ENCODE measurements at regions of chr2 and their contacts with region 1.

Region 1: GRCh38 chr2:97732441-97733340 is 19.3 kb downstream of the ZAP70 start:
- DNase-seq: peak; percentile 42
- ATAC-seq: no peak

Region 2: GRCh38 chr2:97720746-97721145 is 11.9 kb before region 1 on chr2:
- intact Hi-C with region 1: loop called (anchors 1 kb)
- DNase-seq: no peak
- ATAC-seq: no peak

Region 3: GRCh38 chr2:98180456-98180855 is 447.8 kb after region 1 on chr2:
- intact Hi-C with region 1: no loop called
- DNase-seq: no peak
- ATAC-seq: no peak

Measured in sciatic nerve (tissue), 2 donors.